Calu3 (cell line): ENCODE measurements at regions of chr4 and their contacts with region 1.

Region 1: GRCh38 chr4:73895201-73896175 is 26.3 kb downstream of the CXCL1 start:
- DNase-seq: peak; percentile 30
- H3K4me3 Mint-ChIP-seq: peak overlapping the region; percentile 66
- H3K27ac Mint-ChIP-seq: peak overlapping the region; percentile 58
- H3K4me1 Mint-ChIP-seq: peaks cover 64% of the 10 kb centered on the region
- H3K27me3 Mint-ChIP-seq: no peaks in the 10 kb centered on the region
- CTCF ChIP-seq: no peak

Region 2: DNA sequence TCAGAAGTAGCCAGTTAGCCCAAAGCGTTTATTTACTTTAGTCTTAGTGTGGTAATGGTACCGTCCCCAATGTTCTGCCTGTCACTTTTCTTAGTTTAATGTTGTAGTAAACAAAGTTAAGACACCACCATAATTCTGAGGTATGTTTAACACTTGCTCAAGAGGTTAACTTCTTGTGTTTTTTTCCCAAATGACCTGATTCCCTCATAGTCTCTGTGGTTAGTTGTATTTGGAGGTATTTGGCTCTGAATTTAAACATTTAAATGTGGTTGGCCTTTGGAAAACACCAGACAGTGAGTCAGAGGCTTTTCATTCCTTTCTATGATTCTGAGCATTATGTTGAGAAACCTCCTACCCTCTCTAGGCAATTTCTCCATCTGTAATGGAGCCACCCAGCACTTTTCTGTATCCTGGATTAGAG is 21.6 kb after region 1 on chr4:
- CTCF ChIA-PET with region 1: interaction called, 3 read pairs
- intact Hi-C with region 1: loop called (anchors 2 kb)
- DNase-seq: no peak
- H3K4me3 Mint-ChIP-seq: no peak overlapping the region
- H3K27ac Mint-ChIP-seq: peak overlapping the region; percentile 52
- H3K4me1 Mint-ChIP-seq: peaks cover 31% of the 10 kb centered on the region
- H3K27me3 Mint-ChIP-seq: no peaks in the 10 kb centered on the region
- CTCF ChIP-seq: no peak